Posterior vena cava (tissue), 2 donors: ENCODE measurements at regions of chr2 and their contacts with region 1.

Region 1: GRCh38 chr2:38734299-38735058 is 16.7 kb downstream of the SRSF7 start:
- DNase-seq: no peak

Region 2: GRCh38 chr2:38315707-38316333 is 418.7 kb before region 1 on chr2:
- intact Hi-C with region 1: loop called in 1 of 2 experiments (anchors 5 kb)
- DNase-seq: no peak

Region 3: GRCh38 chr2:38535744-38536506 is 198.6 kb before region 1 on chr2:
- intact Hi-C with region 1: loop called (anchors 5 kb)
- DNase-seq: peak; percentile 95

Region 4: DNA sequence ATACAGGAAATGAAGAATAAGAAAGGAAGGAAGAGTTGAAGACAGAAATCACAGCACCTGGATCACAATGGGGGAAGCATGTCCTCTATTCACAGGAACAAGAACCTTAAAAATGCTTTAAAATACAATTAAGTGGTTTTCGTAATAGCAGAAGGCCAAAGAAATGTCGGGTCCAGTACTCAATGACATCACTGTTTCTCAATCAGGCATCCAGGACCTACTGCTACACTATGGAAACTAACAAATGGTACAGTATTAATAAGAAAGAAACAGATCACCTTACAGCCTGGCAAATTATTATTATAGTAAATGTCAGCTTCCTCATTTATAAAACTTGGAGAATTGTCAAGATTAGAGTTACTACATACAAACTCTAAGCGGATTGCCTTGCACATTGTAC is 147.5 kb before region 1 on chr2:
- intact Hi-C with region 1: loop called in 1 of 2 experiments (anchors 5 kb)
- DNase-seq: no peak

Region 5: DNA sequence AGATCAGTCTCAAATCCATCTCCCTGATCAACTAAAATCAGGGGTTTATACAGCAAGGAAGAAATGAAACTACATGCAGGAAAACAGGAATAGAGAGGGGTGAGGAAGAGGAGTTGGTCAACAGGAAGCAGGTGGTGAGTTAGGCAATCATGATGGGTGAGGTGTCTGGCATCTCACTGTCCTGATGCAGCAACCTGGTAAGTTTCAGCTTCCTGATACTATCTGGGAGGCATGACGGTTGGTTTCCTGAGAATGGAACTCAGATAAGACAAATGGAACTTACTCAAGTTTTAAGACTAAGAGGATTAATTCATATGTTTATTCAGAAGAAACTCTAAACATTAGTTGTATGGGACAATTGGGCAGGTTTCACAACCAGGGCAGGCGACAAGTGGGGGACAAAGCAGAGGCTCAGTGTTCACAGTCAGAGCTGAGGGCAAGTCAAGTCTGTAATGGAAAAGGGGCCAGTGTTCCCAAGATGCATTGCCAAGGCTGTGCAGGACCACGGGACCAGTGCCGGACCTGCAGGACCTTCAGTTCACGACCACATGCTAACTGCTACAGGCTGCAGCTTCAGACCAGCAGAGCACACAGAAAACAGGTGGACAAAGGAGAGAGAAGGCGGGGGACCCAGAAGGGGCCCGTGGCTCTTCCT is 86.2 kb before region 1 on chr2:
- intact Hi-C with region 1: no loop called
- DNase-seq: no peak

Region 6: GRCh38 chr2:38997781-38998180 is 263.3 kb after region 1 on chr2:
- intact Hi-C with region 1: no loop called
- DNase-seq: no peak